Activated T-helper 2 cell treated with anti-CD3 and anti-CD28 coated beads, Interferon-gamma antibody, Interleukin-2, Interleukin-4, amounts not matched to agents 10 μg/mL and 5 μg/mL and 100 μg/mL, durations not matched to agents 14 hours and 24 hours and 36 hours (primary cell): ENCODE measurements at regions of chr20 and their contacts with region 1.

Region 1: GRCh38 chr20:10596726-10597125 is 77.1 kb downstream of the JAG1 start:
- DNase-seq: no peak
- H3K4me3 Mint-ChIP-seq: no peak overlapping the region
- H3K27ac Mint-ChIP-seq: no peak overlapping the region
- H3K4me1 Mint-ChIP-seq: peaks cover 32% of the 10 kb centered on the region
- H3K27me3 Mint-ChIP-seq: peaks cover 3% of the 10 kb centered on the region

Region 2: GRCh38 chr20:10336959-10337728 is 259.6 kb before region 1 on chr20:
- intact Hi-C with region 1: no loop called
- DNase-seq: no peak
- H3K4me3 Mint-ChIP-seq: no peak overlapping the region
- H3K27ac Mint-ChIP-seq: no peak overlapping the region
- H3K4me1 Mint-ChIP-seq: peaks cover 12% of the 10 kb centered on the region
- H3K27me3 Mint-ChIP-seq: peaks cover 5% of the 10 kb centered on the region

Region 3: GRCh38 chr20:10447027-10447426 is 149.7 kb before region 1 on chr20:
- intact Hi-C with region 1: loop called (anchors 2 kb)
- DNase-seq: peak; percentile 63
- H3K4me3 Mint-ChIP-seq: peak overlapping the region; percentile 72
- H3K27ac Mint-ChIP-seq: peak overlapping the region; percentile 87
- H3K4me1 Mint-ChIP-seq: peaks cover 36% of the 10 kb centered on the region
- H3K27me3 Mint-ChIP-seq: no peaks in the 10 kb centered on the region

Region 4: DNA sequence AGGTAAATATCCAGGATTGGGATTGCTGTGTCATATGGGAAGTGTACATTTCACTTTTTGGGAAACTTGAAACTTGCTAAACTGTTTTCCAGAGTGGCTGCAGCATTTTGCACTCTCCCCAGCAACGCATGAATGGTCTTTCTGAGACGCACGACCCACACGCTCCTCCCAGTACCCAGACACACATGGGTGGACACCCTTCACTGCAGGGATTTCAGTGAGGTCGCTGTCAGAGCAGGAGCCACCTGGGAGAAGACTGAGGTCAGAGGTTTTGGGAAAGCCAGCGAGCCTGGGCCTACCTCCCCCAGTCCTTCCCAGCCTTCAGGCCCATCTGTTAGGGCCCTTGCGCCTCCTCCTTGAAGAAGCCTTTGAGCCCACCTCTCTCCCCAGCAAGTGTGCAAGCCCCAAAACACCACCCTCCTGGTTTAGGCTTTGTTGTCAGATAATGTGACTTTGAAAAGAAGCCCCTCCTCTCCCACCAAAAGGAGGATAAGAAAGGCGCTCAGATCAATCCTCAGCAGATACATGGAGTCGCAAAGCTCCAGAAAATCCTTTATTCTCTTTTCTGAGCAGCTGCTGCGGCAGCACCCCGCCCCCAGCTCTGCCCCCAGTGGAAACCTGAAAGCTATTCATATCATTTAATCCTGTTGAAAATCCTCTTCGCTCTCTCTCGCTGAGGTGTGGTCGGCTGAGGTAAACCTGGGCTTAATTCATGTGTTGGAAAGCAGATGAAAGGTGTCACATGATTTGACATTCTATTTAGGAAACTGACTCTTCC is 89.8 kb after region 1 on chr20:
- intact Hi-C with region 1: no loop called
- DNase-seq: no peak
- H3K4me3 Mint-ChIP-seq: no peak overlapping the region
- H3K27ac Mint-ChIP-seq: no peak overlapping the region
- H3K4me1 Mint-ChIP-seq: no peaks in the 10 kb centered on the region
- H3K27me3 Mint-ChIP-seq: peaks cover 19% of the 10 kb centered on the region

Region 5: GRCh38 chr20:10747019-10747418 is 150.3 kb after region 1 on chr20:
- intact Hi-C with region 1: no loop called
- DNase-seq: no peak
- H3K4me3 Mint-ChIP-seq: no peak overlapping the region
- H3K27ac Mint-ChIP-seq: no peak overlapping the region
- H3K4me1 Mint-ChIP-seq: no peaks in the 10 kb centered on the region
- H3K27me3 Mint-ChIP-seq: no peaks in the 10 kb centered on the region